CD4-positive, alpha-beta T cell (primary cell): ENCODE measurements at regions of chr6 and their contacts with region 1.

Region 1: GRCh38 chr6:144343701-144344428 is 58.7 kb downstream of the UTRN start:
- DNase-seq: peak in 11 of 14 experiments; percentile 30 to 91 (median 48)
- ATAC-seq: peak; percentile 74
- H3K4me3 ChIP-seq: peak overlapping the region; percentile 72
- H3K4me3 Mint-ChIP-seq: peak overlapping the region; percentile 88
- H3K27ac ChIP-seq: peak overlapping the region; percentile 56 to 75
- H3K27ac Mint-ChIP-seq: peak overlapping the region; percentile 89
- H3K4me1 ChIP-seq: peaks cover 58% of the 10 kb centered on the region
- H3K4me1 Mint-ChIP-seq: peaks cover 73% of the 10 kb centered on the region
- H3K27me3 ChIP-seq: no peaks in the 10 kb centered on the region
- H3K27me3 Mint-ChIP-seq: no peaks in the 10 kb centered on the region
- CTCF ChIP-seq: no peak

Region 2: DNA sequence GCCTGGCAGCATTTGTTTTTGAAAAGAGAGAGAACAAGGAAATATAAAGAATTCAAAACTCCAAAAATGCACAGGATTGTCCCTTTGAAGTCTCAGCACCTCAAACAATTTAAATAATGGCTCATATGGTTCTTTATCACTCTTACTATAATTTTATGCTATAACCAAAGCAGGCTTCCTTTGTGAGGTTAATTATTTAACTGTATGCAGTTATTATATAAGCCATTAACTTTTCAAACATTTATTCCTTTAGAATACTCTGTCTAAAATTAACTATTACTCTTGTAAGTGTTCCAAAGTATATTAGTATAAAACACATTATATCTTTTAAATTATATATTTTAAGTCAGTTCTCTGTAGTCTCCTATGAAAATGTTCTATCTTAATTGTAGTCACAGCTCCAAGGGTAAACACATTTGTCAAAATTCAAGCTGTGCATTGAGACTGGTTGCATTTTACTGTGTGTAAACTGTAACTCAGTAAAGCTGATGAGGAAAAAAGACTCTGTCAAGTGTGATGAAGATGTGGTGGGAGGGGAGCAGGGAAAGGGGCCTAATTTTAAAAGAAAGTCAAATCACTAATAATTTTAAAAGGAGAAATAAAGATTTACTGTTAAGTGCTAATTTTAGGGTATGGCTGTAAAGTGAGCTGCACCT is 315.8 kb before region 1 on chr6:
- CTCF ChIA-PET with region 1: no interaction called
- POLR2A ChIA-PET with region 1: no interaction called
- intact Hi-C with region 1: no loop called
- DNase-seq: no peak
- ATAC-seq: no peak
- H3K4me3 ChIP-seq: no peak overlapping the region
- H3K4me3 Mint-ChIP-seq: no peak overlapping the region
- H3K27ac ChIP-seq: no peak overlapping the region
- H3K27ac Mint-ChIP-seq: no peak overlapping the region
- H3K4me1 ChIP-seq: no peaks in the 10 kb centered on the region
- H3K4me1 Mint-ChIP-seq: no peaks in the 10 kb centered on the region
- H3K27me3 ChIP-seq: no peaks in the 10 kb centered on the region
- H3K27me3 Mint-ChIP-seq: no peaks in the 10 kb centered on the region
- CTCF ChIP-seq: no peak

Region 3: DNA sequence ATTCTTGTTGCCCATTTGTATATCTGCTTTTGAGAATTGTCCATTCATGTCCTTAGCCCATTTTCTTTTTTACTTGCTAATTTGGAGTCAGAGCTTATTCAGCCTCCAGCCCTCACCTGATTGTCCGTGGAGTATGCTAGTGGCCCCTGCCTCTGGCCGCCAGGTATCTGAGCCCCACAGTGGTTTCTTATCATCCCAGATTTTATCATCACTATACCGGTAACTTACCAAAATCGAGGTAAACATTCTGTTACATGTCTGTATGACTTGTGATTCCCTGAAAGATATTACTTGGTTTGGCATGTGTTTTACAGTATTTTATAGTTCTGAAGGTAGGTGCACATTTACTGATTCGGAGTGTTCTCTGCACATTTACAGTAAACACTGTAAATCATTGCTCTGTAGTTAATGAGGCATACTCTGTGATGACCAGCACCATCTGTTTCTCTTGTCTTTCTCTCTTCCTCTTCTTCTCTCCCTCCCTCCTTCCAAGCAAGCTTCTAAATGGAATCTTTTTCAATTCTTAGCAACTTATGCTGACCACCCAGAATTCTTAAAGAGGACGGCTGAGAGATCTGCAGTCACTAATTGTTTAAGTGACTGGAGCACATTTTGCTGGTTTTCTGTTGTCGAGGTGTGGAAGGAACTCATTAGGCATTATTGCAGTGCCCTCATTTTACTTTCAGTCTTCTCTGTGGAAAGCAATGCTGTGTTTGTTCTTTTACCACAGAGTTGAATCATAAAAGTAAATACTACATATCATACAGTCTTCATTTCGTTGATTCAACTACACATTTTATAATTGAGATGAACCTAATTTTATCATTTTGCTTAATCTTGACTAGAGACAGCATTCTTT is 67.7 kb after region 1 on chr6:
- CTCF ChIA-PET with region 1: interaction called, 4 read pairs
- POLR2A ChIA-PET with region 1: no interaction called
- intact Hi-C with region 1: loop called in 1 of 2 experiments (anchors 5 kb)
- DNase-seq: peak in 1 of 14 experiments; percentile 23
- ATAC-seq: peak; percentile 43
- H3K4me3 ChIP-seq: no peak overlapping the region
- H3K4me3 Mint-ChIP-seq: peak overlapping the region; percentile 61
- H3K27ac ChIP-seq: no peak overlapping the region
- H3K27ac Mint-ChIP-seq: peak overlapping the region; percentile 67
- H3K4me1 ChIP-seq: peaks cover 16% of the 10 kb centered on the region
- H3K4me1 Mint-ChIP-seq: peaks cover 75% of the 10 kb centered on the region
- H3K27me3 ChIP-seq: no peaks in the 10 kb centered on the region
- H3K27me3 Mint-ChIP-seq: no peaks in the 10 kb centered on the region
- CTCF ChIP-seq: no peak

Region 4: GRCh38 chr6:144423167-144423566 is 79.3 kb after region 1 on chr6:
- CTCF ChIA-PET with region 1: no interaction called
- POLR2A ChIA-PET with region 1: no interaction called
- intact Hi-C with region 1: no loop called
- DNase-seq: no peak
- ATAC-seq: no peak
- H3K4me3 ChIP-seq: no peak overlapping the region
- H3K4me3 Mint-ChIP-seq: no peak overlapping the region
- H3K27ac ChIP-seq: no peak overlapping the region
- H3K27ac Mint-ChIP-seq: no peak overlapping the region
- H3K4me1 ChIP-seq: peaks cover 11% of the 10 kb centered on the region
- H3K4me1 Mint-ChIP-seq: peaks cover 33% of the 10 kb centered on the region
- H3K27me3 ChIP-seq: no peaks in the 10 kb centered on the region
- H3K27me3 Mint-ChIP-seq: no peaks in the 10 kb centered on the region
- CTCF ChIP-seq: no peak